ENCODE measurements at regions of chr3 and their contacts with region 1.

Region 1: GRCh38 chr3:111338059-111338698 is 203.8 kb upstream of the CD96 start:
- DNase-seq: peak; percentile 12
- H3K4me3 Mint-ChIP-seq: no peak overlapping the region
- H3K27ac Mint-ChIP-seq: no peak overlapping the region
- H3K4me1 Mint-ChIP-seq: peaks cover 26% of the 10 kb centered on the region
- H3K27me3 Mint-ChIP-seq: no peaks in the 10 kb centered on the region

Region 2: GRCh38 chr3:110314512-110315114 is 1023.6 kb before region 1 on chr3:
- intact Hi-C with region 1: loop called (anchors 2 kb)
- DNase-seq: peak; percentile 20
- H3K4me3 Mint-ChIP-seq: no peak overlapping the region
- H3K27ac Mint-ChIP-seq: no peak overlapping the region
- H3K4me1 Mint-ChIP-seq: no peaks in the 10 kb centered on the region
- H3K27me3 Mint-ChIP-seq: peaks cover 5% of the 10 kb centered on the region

Region 3: DNA sequence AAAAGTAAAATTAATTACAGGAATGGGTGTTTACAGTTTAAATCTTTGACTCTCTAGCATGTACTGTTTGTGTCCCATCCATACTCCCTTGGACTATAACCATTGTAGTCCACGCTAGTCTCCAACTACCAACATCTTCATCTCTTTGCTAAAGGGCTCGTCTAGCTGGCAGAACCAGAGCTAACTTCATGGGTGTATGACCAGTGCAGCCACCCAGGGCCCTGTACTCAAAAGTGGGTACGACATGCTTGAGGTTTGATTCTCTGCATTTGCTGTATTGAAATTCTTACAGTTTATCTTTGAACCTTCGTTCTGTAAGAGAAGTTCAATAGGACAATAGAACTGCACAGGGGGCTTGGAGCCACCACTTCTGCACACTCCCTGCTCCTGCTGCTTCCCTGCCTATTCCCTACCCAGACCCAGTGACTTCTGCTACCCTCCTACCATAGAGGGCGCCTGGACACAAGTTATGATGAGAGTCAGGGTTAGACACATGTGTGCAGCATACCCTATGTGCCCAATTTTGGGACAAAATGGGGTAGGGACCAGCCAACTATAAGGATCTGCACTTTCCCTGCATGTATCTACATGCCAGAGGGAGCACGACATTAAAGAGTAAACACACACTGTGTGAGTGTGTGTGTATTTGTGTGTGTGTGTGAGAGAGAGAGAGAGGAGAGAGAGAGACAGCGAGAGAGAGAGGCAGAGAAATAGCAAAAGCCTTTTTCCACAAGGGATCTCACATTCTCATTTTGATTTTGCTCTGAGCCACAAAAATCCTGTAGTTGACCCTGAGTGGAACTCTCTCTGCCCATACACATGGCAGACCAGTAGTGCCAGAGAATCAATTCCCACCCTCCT is 325.6 kb before region 1 on chr3:
- intact Hi-C with region 1: loop called (anchors 2 kb)
- DNase-seq: no peak
- H3K4me3 Mint-ChIP-seq: no peak overlapping the region
- H3K27ac Mint-ChIP-seq: no peak overlapping the region
- H3K4me1 Mint-ChIP-seq: no peaks in the 10 kb centered on the region
- H3K27me3 Mint-ChIP-seq: no peaks in the 10 kb centered on the region

Region 4: DNA sequence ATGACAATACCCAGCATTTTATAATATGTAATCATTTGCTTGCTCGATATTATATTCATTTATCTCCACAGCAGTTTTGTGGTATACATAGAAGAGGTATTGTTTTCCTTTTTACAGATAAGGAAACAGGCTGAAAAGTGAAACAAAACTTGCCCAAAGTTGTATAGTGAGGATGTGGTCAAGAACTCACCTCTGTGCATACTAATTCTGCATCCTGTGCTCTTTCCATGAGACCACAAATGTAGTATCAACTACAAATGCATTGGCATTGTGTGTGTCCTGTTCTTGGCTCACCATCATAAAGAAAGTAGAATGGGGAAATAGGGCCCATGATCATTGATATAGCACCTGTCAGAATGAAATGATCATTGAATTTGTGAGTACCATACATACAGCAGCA is 99.3 kb before region 1 on chr3:
- intact Hi-C with region 1: loop called (anchors 2 kb)
- DNase-seq: peak; percentile 48
- H3K4me3 Mint-ChIP-seq: peak overlapping the region; percentile 69
- H3K27ac Mint-ChIP-seq: peak overlapping the region; percentile 76
- H3K4me1 Mint-ChIP-seq: peaks cover 49% of the 10 kb centered on the region
- H3K27me3 Mint-ChIP-seq: no peaks in the 10 kb centered on the region

Region 5: GRCh38 chr3:111311709-111312235 is 26.4 kb before region 1 on chr3:
- intact Hi-C with region 1: loop called (anchors 2 kb)
- DNase-seq: no peak
- H3K4me3 Mint-ChIP-seq: peak overlapping the region; percentile 45
- H3K27ac Mint-ChIP-seq: peak overlapping the region; percentile 92
- H3K4me1 Mint-ChIP-seq: no peaks in the 10 kb centered on the region
- H3K27me3 Mint-ChIP-seq: no peaks in the 10 kb centered on the region

Region 6: GRCh38 chr3:111616417-111617105 is 278.4 kb after region 1 on chr3:
- intact Hi-C with region 1: loop called (anchors 5 kb)
- DNase-seq: peak; percentile 61
- H3K4me3 Mint-ChIP-seq: peak overlapping the region; percentile 70
- H3K27ac Mint-ChIP-seq: peak overlapping the region; percentile 98
- H3K4me1 Mint-ChIP-seq: peaks cover 84% of the 10 kb centered on the region
- H3K27me3 Mint-ChIP-seq: no peaks in the 10 kb centered on the region

Measured in activated T-helper 1 cell treated with anti-CD3 and anti-CD28 coated beads, Interleukin-12 subunit alpha, Interleukin-12 subunit beta, Interleukin-2, Interleukin-4 antibody, amounts not matched to agents 30 ng/mL and 10 ng/mL and 1 ng/mL, durations not matched to agents 14 hours and 24 hours and 36 hours (primary cell).